Caco-2 (cell line): ENCODE measurements at regions of chr2 and their contacts with region 1.

Region 1: DNA sequence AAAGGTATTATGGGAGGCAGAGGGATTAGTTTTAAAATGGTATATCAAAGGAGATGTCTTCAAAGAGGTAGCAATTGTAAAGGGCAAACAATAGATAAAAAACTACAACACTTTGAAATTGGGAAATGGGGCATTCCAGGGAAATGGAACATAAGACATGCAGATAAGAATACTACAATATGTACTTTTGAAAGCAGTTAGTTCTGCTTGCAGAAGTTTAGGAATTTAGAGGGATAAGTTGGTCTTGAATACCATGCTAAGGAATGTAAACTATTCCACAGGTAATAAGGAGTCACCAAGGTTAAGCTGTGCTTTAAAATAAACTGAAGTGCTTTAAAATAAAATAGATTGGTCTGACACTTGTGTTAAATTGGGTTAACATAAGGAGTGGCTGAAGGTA is 571.7 kb upstream of the ACVR2A start:
- DNase-seq: peak in 1 of 2 experiments; percentile 63
- H3K4me3 ChIP-seq: no peak overlapping the region
- H3K4me3 Mint-ChIP-seq: peak overlapping the region; percentile 34
- H3K27ac Mint-ChIP-seq: peak overlapping the region; percentile 85
- H3K4me1 ChIP-seq: peaks cover 23% of the 10 kb centered on the region
- H3K4me1 Mint-ChIP-seq: peaks cover 16% of the 10 kb centered on the region
- H3K27me3 ChIP-seq: no peaks in the 10 kb centered on the region
- H3K27me3 Mint-ChIP-seq: no peaks in the 10 kb centered on the region
- CTCF ChIP-seq: no peak

Region 2: GRCh38 chr2:147177071-147177850 is 95.8 kb before region 1 on chr2:
- CTCF ChIA-PET with region 1: no interaction called
- POLR2A ChIA-PET with region 1: no interaction called
- intact Hi-C with region 1: loop called (anchors 1 kb)
- DNase-seq: no peak
- H3K4me3 ChIP-seq: no peak overlapping the region
- H3K4me3 Mint-ChIP-seq: no peak overlapping the region
- H3K27ac Mint-ChIP-seq: no peak overlapping the region
- H3K4me1 ChIP-seq: peaks cover 21% of the 10 kb centered on the region
- H3K4me1 Mint-ChIP-seq: peaks cover 11% of the 10 kb centered on the region
- H3K27me3 ChIP-seq: no peaks in the 10 kb centered on the region
- H3K27me3 Mint-ChIP-seq: no peaks in the 10 kb centered on the region
- CTCF ChIP-seq: no peak

Region 3: DNA sequence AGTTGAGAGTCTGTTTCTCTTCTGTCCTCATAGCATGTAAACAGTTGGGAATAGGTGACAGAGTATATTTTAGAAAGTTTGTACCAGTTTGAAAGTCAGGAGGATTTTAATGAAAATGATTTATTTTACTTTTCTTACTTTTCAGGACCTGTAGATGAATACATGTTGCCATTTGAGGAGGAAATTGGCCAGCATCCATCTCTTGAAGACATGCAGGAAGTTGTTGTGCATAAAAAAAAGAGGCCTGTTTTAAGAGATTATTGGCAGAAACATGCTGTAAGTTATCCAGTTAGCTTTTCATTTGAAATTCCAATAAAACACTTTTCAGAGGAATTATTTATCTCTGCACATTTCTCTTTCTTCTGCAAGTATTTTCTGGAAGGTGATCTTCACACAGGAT is 652.8 kb after region 1 on chr2:
- CTCF ChIA-PET with region 1: no interaction called
- POLR2A ChIA-PET with region 1: no interaction called
- intact Hi-C with region 1: loop called (anchors 1 kb)
- DNase-seq: no peak
- H3K4me3 ChIP-seq: no peak overlapping the region
- H3K4me3 Mint-ChIP-seq: peak overlapping the region; percentile 8
- H3K27ac Mint-ChIP-seq: peak overlapping the region; percentile 82
- H3K4me1 ChIP-seq: peaks cover 37% of the 10 kb centered on the region
- H3K4me1 Mint-ChIP-seq: peaks cover 16% of the 10 kb centered on the region
- H3K27me3 ChIP-seq: no peaks in the 10 kb centered on the region
- H3K27me3 Mint-ChIP-seq: no peaks in the 10 kb centered on the region
- CTCF ChIP-seq: no peak